Head of caudate nucleus (tissue), 42 donors: ENCODE measurements at regions of chr17 and their contacts with region 1.

Region 1: GRCh38 chr17:81238817-81239600 is at the starts of genes NDUFAF8 and TEPSIN:
- DNase-seq: peak; percentile 94 to 100 (median 98)

Region 2: GRCh38 chr17:81135503-81136278 is 103.3 kb before region 1 on chr17:
- intact Hi-C with region 1: loop called (anchors 5 kb)
- DNase-seq: peak in 39 of 42 donors; percentile 54 to 87 (median 72)

Region 3: GRCh38 chr17:81272616-81273015 is 33.6 kb after region 1 on chr17:
- intact Hi-C with region 1: no loop called
- DNase-seq: no peak